ENCODE measurements at regions of chr3 and their contacts with region 1.

Region 1: DNA sequence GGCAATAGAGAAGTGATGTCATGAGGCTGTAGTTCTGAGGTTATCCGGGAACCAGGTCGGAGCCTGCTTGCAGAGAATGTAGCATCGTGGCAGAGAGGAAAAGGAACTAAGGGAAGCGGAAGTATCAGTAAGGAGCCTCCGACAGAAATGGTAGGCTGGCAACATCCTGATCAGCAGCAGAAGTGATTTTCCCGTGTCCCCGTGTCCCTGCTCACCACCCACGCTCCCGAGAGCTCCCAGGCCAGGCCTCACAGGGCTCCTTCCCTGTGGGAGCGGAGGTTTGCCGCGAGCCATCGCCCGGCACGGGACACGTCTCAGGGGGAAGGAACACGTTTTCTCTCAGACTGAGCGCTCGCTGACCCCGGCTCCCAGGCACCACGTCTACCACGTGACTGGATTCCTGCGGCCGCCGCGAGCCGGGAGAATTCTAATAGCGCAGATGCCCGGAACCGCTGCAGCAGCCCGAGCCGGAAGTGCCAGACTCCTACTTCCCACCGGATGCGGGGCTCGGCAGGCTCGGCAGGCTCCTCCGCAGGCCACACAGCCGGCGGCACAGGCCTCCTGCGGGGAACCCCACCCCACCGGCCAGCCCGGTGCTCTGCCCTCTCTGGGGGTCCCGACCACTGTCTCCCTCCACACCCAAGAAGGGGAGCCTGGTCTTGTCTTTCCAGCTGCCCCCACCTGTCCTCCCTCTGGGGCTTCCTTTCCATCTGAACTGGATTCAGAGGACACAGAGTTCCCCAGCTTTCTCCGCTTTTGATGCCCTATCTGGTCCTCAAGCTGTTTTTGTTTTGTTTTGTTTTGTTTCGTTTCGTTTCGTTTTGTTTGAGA is 99.3 kb downstream of the BDH1 start:
- DNase-seq: peak; percentile 77
- H3K4me3 ChIP-seq: peak overlapping the region in 2 of 3 experiments; percentile 12 to 35
- H3K27ac ChIP-seq: peak overlapping the region; percentile 47
- H3K4me1 ChIP-seq: peaks cover 11% of the 10 kb centered on the region
- H3K27me3 ChIP-seq: no peaks in the 10 kb centered on the region
- CTCF ChIP-seq: no peak
- POLR2A ChIP-seq: peak; percentile 89

Region 2: DNA sequence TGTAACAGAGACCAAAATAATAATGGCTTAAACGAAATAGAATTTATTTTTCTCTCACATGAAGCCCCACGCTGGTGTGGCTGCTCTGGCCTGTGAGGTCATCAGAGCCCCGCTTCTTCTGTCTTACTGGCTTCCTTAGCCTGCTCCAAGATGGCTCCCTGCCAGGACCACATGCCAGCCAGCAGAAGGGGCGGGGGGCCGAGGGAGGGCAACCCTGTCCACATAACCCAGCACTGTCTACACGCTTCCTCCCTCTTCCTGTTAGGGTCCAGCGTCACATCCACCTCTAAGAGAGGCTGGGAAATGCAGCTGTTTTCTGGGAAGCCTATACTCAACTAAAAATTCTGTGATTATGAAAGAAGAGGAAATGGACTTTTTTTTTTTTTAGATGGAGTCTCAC is 50.2 kb before region 1 on chr3:
- CTCF ChIA-PET with region 1: no interaction called
- POLR2A ChIA-PET with region 1: no interaction called
- dilution Hi-C with region 1: no loop called
- intact Hi-C with region 1: loop called (anchors 1 kb)
- DNase-seq: peak; percentile 88
- H3K4me3 ChIP-seq: no peak overlapping the region
- H3K27ac ChIP-seq: peak overlapping the region; percentile 27
- H3K4me1 ChIP-seq: peaks cover 4% of the 10 kb centered on the region
- H3K27me3 ChIP-seq: no peaks in the 10 kb centered on the region
- CTCF ChIP-seq: no peak
- POLR2A ChIP-seq: no peak

Measured in endothelial cell of umbilical vein (primary cell).